Aorta (tissue), 5 donors: ENCODE measurements at regions of chr16 and their contacts with region 1.

Region 1: GRCh38 chr16:48609652-48610029 is 339 bp downstream of the N4BP1 start:
- DNase-seq: peak; percentile 72 to 90
- ATAC-seq: peak; percentile 72
- H3K4me3 ChIP-seq: peak overlapping the region; percentile 86 to 94
- H3K27ac ChIP-seq: peak overlapping the region; percentile 69 to 84
- H3K4me1 ChIP-seq: no peaks in the 10 kb centered on the region
- H3K27me3 ChIP-seq: no peaks in the 10 kb centered on the region

Region 2: DNA sequence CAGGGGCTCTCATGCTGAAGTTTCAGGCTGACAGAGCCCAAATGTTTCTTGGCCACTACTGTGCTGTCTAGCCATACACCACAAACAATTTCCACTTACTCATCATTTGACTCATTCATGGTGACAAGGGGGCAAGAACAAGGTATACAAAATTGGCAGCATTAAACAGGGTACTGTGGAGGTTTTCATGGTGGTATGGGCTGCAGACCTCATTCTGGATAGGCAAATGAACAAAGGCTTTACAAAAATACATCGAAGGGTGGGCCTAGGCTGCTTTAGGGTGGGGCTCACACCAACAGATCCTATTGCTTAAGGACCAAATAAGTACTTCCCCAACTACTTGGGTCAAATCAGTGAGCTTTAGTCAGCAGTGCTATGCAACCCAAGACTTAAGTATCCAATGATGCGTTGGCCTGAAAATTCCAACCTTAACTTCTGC is 52.7 kb before region 1 on chr16:
- intact Hi-C with region 1: loop called in 1 of 2 experiments (anchors 5 kb)
- DNase-seq: no peak
- ATAC-seq: no peak
- H3K4me3 ChIP-seq: no peak overlapping the region
- H3K27ac ChIP-seq: no peak overlapping the region
- H3K4me1 ChIP-seq: peaks cover 4 to 26% of the 10 kb centered on the region in 2 donors
- H3K27me3 ChIP-seq: no peaks in the 10 kb centered on the region